Mammary epithelial cell (primary cell): ENCODE measurements at regions of chr3 and their contacts with region 1.

Region 1: GRCh38 chr3:172476347-172476746 is 28.1 kb upstream of the GHSR start:
- DNase-seq: no peak
- H3K4me3 ChIP-seq: peak overlapping the region in 2 of 3 experiments; percentile 46 to 52
- H3K27ac ChIP-seq: peak overlapping the region; percentile 68
- H3K4me1 ChIP-seq: peaks cover 7% of the 10 kb centered on the region
- H3K27me3 ChIP-seq: no peaks in the 10 kb centered on the region
- CTCF ChIP-seq: no peak

Region 2: DNA sequence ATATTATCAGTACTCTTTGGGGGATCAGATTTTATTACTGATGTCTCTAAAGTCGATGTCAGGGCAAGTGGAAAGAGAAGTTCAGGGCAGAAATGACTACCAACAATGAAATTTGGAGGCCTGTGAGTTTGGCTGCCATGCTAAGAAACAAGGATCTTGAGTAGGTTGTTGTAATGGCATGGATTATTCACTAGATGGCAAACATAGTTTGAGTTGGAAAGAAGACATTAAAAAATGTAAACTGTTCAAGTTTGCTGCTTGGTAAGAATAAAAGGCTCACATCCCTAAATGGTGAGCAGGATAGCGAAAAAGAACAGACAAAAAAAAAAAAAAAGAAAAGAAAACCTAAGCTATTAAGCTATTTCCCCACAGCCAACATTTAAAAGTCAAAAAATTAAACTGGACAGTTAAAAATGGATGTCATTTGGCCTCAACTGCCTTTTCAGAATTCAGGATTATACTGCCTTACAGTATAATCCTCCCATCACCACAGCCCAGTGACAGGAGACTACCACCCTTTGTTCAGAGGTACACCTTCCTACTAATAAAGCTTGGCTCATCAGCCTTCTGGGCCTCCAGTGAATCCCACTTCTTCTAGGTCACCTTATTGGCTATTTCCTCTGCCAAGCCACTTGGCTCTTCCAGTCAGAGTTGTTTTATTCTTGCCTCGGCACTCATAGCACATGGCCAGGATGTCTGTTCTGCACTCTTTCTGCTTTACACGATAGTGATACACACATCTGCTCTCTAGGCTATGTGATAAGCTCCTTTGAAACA is 829.8 kb before region 1 on chr3:
- CTCF ChIA-PET with region 1: no interaction called
- dilution Hi-C with region 1: no loop called
- in situ Hi-C with region 1: no loop called
- intact Hi-C with region 1: loop called (anchors 10 kb)
- DNase-seq: peak; percentile 46
- H3K4me3 ChIP-seq: no peak overlapping the region
- H3K27ac ChIP-seq: no peak overlapping the region
- H3K4me1 ChIP-seq: no peaks in the 10 kb centered on the region
- H3K27me3 ChIP-seq: no peaks in the 10 kb centered on the region
- CTCF ChIP-seq: peak; percentile 57 to 66

Region 3: GRCh38 chr3:172355839-172356238 is 120.5 kb before region 1 on chr3:
- CTCF ChIA-PET with region 1: no interaction called
- dilution Hi-C with region 1: no loop called
- in situ Hi-C with region 1: no loop called
- intact Hi-C with region 1: loop called (anchors 5 kb)
- DNase-seq: peak; percentile 74
- H3K4me3 ChIP-seq: no peak overlapping the region
- H3K27ac ChIP-seq: no peak overlapping the region
- H3K4me1 ChIP-seq: peaks cover 7% of the 10 kb centered on the region
- H3K27me3 ChIP-seq: no peaks in the 10 kb centered on the region
- CTCF ChIP-seq: no peak

Region 4: DNA sequence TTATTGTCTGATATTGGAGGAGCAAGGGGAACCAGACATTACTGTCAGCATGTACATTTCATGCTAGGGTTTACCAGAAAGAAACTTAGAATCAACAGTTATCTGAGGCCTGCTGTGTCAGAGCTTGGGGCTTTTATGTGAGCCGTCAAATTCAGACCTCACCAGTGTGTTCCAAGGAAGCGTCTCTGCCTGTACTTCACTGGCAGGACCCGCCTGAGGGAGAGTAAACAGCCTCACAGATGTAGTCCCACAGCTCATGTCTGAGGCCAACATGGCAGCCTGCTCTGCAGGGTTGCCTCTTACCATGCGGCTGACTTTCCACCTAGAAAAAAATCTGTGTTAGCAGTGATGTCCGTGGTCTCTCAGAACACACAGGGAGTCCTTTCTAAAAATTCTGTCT is 102.4 kb before region 1 on chr3:
- CTCF ChIA-PET with region 1: interaction called, 10 read pairs
- dilution Hi-C with region 1: no loop called
- in situ Hi-C with region 1: no loop called
- intact Hi-C with region 1: no loop called
- DNase-seq: no peak
- H3K4me3 ChIP-seq: no peak overlapping the region
- H3K27ac ChIP-seq: no peak overlapping the region
- H3K4me1 ChIP-seq: no peaks in the 10 kb centered on the region
- H3K27me3 ChIP-seq: no peaks in the 10 kb centered on the region
- CTCF ChIP-seq: no peak

Region 5: GRCh38 chr3:172410702-172411477 is 65.5 kb before region 1 on chr3:
- CTCF ChIA-PET with region 1: no interaction called
- dilution Hi-C with region 1: no loop called
- in situ Hi-C with region 1: no loop called
- intact Hi-C with region 1: no loop called
- DNase-seq: no peak
- H3K4me3 ChIP-seq: no peak overlapping the region
- H3K27ac ChIP-seq: no peak overlapping the region
- H3K4me1 ChIP-seq: no peaks in the 10 kb centered on the region
- H3K27me3 ChIP-seq: peaks cover 2% of the 10 kb centered on the region
- CTCF ChIP-seq: no peak

Region 6: GRCh38 chr3:172511783-172512762 is 35.7 kb after region 1 on chr3:
- CTCF ChIA-PET with region 1: no interaction called
- dilution Hi-C with region 1: loop called (anchors 5 kb)
- in situ Hi-C with region 1: no loop called
- intact Hi-C with region 1: no loop called
- DNase-seq: no peak
- H3K4me3 ChIP-seq: no peak overlapping the region
- H3K27ac ChIP-seq: no peak overlapping the region
- H3K4me1 ChIP-seq: peaks cover 14% of the 10 kb centered on the region
- H3K27me3 ChIP-seq: no peaks in the 10 kb centered on the region
- CTCF ChIP-seq: no peak

Region 7: DNA sequence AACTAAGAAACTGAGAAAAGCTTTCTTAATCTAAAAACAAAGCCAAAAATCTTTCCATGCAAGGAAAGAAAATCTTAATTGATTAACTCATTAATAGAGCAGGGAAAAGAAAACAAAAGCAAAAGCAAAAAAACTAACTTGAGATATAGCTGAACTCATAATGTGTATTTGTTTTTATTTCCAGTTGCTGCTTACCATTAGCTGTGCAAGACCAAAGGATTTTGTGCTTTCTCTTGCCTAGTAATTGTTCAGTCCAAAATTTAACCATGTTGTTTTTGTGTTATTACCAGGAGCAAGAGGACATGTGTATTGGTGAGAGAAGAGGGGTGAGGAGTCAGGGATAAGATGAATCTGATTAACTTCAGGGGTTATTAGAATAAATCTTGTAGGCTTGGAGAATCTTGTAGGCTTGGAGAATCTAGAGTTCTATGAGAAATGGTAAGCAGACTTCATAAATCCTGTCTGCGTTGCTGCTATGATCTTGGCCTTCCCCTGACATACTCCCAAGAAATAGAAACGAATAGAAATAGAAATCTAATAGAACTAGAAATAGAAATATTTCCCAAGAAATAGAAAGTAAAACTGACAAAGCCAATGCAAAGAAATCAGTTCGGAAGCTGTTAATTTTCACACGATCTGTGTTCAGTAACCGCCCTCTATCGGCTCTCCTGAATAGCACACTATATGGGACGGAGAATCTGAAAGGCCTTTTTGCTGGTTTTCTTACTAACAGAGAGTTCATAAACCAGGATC is 119.5 kb after region 1 on chr3:
- CTCF ChIA-PET with region 1: no interaction called
- dilution Hi-C with region 1: no loop called
- in situ Hi-C with region 1: loop called in 1 of 2 experiments (anchors 5 kb)
- intact Hi-C with region 1: no loop called
- DNase-seq: peak; percentile 65
- H3K4me3 ChIP-seq: peak overlapping the region; percentile 11 to 23 (median 11)
- H3K27ac ChIP-seq: peak overlapping the region; percentile 28
- H3K4me1 ChIP-seq: peaks cover 8% of the 10 kb centered on the region
- H3K27me3 ChIP-seq: no peaks in the 10 kb centered on the region
- CTCF ChIP-seq: peak; percentile 86 to 90